Gastrocnemius medialis (tissue), 4 donors: ENCODE measurements at regions of chr7 and their contacts with region 1.

Region 1: DNA sequence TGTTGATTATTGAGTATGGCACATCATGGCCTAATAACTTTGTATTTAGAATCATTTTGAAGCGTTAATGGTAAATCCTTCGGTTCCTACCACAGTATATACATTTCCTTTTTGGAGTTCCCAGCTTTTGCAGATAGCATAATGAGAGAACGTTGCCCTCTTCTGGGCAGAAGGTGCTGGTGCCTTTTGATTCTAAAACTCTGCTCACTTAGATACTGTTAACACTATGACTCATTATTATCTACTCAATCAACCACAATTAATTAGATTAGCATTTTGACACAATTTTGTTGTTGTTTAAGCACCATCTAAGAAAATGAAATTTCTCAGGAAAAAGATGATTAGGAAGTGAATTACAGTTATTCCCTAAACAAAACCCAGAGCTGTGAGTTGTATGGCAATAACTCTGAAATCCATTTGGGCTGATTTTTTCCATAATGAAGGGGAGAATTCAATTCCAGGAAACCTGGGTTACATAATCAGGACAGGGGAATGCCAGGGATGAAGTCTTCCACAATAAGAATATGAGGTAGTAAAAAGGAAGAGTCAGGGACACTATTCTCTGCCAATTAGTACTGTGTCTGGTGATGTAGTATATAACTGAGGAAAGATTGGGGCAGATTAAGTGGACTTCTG is 11.5 kb upstream of the DLD start:
- DNase-seq: no peak
- ATAC-seq: peak; percentile 78 to 84
- H3K4me3 ChIP-seq: no peak overlapping the region
- H3K27ac ChIP-seq: peak overlapping the region in 1 of 4 donors; percentile 44
- H3K4me1 ChIP-seq: no peaks in the 10 kb centered on the region
- H3K27me3 ChIP-seq: no peaks in the 10 kb centered on the region
- CTCF ChIP-seq: peak; percentile 29 to 74 (median 67)
- POLR2A ChIP-seq: no peak

Region 2: DNA sequence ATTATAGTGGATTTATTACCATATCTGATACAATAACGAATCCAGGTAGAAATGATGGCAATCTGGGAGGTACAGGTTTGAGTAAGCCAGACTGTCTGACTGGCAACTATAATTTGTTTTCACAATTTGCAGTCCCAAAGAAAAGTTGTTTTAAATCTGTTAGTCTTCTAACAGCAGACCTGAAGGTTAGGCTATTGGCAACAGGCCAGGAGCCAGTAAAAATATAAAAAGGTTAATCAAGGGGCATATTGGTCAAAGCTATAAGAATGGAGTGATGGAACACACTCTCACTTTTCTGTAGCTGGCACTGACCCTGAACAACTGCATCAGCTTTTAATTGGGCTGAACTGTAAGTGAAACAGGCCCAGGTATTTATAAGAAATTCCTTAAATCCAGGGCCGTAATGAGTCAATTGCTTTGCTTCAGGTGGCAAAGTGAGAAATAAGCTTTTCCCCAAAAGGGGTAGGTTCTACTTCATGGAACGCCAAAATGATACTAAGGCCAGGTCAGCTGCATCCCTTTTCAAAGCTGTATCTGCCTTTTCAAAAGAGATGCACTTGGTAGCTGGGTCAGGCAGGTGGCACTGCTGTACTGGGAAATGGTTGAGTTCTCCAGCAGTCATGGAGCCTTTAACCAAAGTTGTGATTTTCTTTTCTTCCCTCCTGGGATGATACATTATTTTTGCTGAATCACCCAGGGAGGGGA is 416.6 kb before region 1 on chr7:
- in situ Hi-C with region 1: loop called in 2 of 4 experiments (anchors 25 kb)
- intact Hi-C with region 1: loop called (anchors 5 kb)
- DNase-seq: peak; percentile 10 to 57
- ATAC-seq: peak; percentile 82 to 94
- H3K4me3 ChIP-seq: no peak overlapping the region
- H3K27ac ChIP-seq: no peak overlapping the region
- H3K4me1 ChIP-seq: no peaks in the 10 kb centered on the region
- H3K27me3 ChIP-seq: no peaks in the 10 kb centered on the region
- CTCF ChIP-seq: peak; percentile 55 to 72 (median 65)
- POLR2A ChIP-seq: no peak

Region 3: GRCh38 chr7:107846324-107846723 is 33.2 kb before region 1 on chr7:
- in situ Hi-C with region 1: no loop called
- intact Hi-C with region 1: loop called (anchors 2 kb)
- DNase-seq: no peak
- ATAC-seq: peak in 1 of 2 donors; percentile 69
- H3K4me3 ChIP-seq: no peak overlapping the region
- H3K27ac ChIP-seq: peak overlapping the region; percentile 51 to 82 (median 70)
- H3K4me1 ChIP-seq: peaks cover 17 to 27% of the 10 kb centered on the region in 2 donors
- H3K27me3 ChIP-seq: no peaks in the 10 kb centered on the region
- CTCF ChIP-seq: no peak
- POLR2A ChIP-seq: no peak

Region 4: DNA sequence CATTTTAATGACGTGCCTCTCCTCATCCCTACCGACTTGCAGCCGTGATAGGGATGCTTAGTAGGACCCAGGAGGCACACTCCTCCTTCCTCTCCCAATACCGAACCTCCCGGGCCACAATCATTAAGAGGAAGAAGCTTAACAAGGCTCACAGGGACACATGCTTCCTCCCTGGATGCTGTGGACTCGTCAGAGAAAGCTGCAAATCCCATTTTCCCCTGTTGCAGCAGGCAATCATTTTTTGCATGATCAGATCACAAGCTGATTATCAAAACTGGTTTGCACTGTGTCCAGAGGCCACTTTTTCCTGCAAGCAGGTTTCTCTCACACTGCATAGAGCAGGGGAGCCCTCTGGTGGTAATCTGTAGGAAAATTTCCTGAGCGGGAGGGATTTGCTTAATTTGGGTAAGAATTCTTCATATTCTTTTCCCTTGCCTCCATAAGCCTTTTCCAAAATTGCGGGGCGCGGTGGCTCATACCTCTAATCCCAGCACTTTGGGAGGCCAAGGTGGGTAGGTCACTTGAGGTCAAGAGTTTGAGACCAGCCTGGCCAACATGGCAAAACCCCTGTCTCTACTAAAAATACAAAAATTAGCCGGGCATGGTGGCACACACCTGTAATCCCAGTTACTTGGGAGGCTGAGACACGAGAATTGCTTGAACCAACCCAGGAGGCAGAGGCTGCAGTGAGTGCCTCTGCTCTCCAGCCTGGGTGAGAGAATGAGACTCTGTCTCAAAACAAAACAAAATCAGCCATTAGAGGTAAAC is 266.7 kb after region 1 on chr7:
- in situ Hi-C with region 1: loop called in 3 of 4 experiments (anchors 25 kb)
- intact Hi-C with region 1: loop called (anchors 5 kb)
- DNase-seq: peak; percentile 12 to 13
- ATAC-seq: peak in 1 of 2 donors; percentile 47
- H3K4me3 ChIP-seq: no peak overlapping the region
- H3K27ac ChIP-seq: no peak overlapping the region
- H3K4me1 ChIP-seq: no peaks in the 10 kb centered on the region
- H3K27me3 ChIP-seq: no peaks in the 10 kb centered on the region
- CTCF ChIP-seq: peak; percentile 46 to 81 (median 63)
- POLR2A ChIP-seq: no peak

Region 5: GRCh38 chr7:108167460-108167859 is 287.9 kb after region 1 on chr7:
- in situ Hi-C with region 1: loop called in 1 of 4 experiments (anchors 25 kb)
- intact Hi-C with region 1: no loop called
- DNase-seq: no peak
- ATAC-seq: no peak
- H3K4me3 ChIP-seq: no peak overlapping the region
- H3K27ac ChIP-seq: no peak overlapping the region
- H3K4me1 ChIP-seq: no peaks in the 10 kb centered on the region
- H3K27me3 ChIP-seq: no peaks in the 10 kb centered on the region
- CTCF ChIP-seq: no peak
- POLR2A ChIP-seq: no peak